HAP-1 (cell line): ENCODE measurements at regions of chrX and their contacts with region 1.

Region 1: DNA sequence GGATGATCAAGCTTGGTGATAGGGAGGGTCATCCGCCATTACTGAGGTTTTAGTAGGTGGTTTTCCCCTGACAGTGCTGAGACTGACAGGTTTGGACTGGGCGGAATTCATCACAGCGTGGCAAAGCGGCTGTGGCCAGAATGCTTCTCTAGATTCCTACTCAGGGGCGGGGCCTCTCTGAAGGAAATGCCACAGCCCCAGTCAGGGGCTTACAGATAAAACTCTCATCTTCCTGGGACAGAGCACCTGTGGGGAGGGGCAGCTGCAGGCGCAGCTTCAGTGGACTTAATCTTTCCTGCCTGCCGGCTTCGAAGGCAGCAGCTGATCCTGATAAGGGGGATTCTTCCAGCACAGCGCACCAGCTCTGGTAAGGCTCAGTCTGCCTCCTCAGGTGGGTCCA is 316.7 kb downstream of the RPA4 start:
- DNase-seq: no peak
- H3K4me3 ChIP-seq: no peak overlapping the region
- H3K4me1 ChIP-seq: no peaks in the 10 kb centered on the region
- H3K27me3 ChIP-seq: no peaks in the 10 kb centered on the region

Region 2: GRCh38 chrX:97168627-97169026 is 31.8 kb before region 1 on chrX:
- in situ Hi-C with region 1: loop called (anchors 5 kb)
- DNase-seq: no peak
- H3K4me3 ChIP-seq: no peak overlapping the region
- H3K4me1 ChIP-seq: peaks cover 12% of the 10 kb centered on the region
- H3K27me3 ChIP-seq: no peaks in the 10 kb centered on the region